WTC11 (cell line): ENCODE measurements at regions of chr5 and their contacts with region 1.

Region 1: DNA sequence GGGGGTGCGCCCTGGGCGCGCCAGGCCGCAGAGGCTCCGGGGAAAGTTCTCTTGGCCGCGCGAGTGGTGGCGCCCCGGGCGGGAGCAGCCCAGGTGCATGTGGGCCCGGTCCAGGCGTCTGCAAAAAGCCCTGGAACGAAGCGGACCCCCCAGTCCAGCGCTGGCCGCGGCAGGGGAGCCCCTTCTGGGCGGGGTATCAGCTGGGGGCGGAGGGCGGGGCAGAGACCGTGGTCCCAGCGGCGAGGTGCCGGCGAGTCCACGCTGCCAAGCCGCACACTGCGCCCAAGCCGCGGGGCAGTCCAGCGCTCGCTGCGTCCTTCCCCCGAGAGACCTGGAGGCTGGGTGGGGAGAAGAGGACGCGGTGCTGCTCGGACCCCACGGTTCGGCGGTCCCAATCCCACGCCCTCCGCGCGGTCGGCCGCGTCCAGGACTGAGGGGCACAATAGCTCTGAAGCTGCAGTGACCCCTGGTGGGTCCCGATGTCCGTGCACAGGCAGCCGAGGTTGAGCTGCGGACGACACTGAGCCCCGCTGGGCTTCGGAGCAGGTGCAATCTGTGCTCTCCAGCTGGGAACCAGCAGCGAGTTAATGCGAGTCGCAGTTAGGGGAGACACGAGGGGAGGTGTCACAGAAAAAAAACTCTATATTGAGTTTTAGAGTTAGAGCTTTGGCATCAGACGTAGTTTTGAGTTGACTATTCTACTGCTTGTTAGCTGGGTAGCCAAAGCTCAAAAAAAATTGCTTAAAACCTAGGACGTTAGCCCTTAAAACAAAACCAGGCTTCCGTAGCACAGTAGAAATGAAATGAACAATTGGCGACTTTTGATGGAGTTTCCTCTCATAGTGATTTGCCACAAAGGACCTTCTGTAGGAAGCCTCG is 1.1 kb upstream of the EPB41L4A start:
- DNase-seq: peak; percentile 90
- ATAC-seq: peak; percentile 85
- H3K4me3 Mint-ChIP-seq: peak overlapping the region; percentile 80
- H3K27ac Mint-ChIP-seq: no peak overlapping the region
- H3K4me1 Mint-ChIP-seq: peaks cover 21% of the 10 kb centered on the region
- H3K27me3 Mint-ChIP-seq: peaks cover 47% of the 10 kb centered on the region
- CTCF ChIP-seq: peak; percentile 77

Region 2: GRCh38 chr5:112165897-112166806 is 254.1 kb before region 1 on chr5:
- CTCF ChIA-PET with region 1: interaction called, 36 read pairs
- POLR2A ChIA-PET with region 1: interaction called, 11 read pairs
- DNase-seq: peak; percentile 41
- ATAC-seq: peak; percentile 82
- H3K4me3 Mint-ChIP-seq: no peak overlapping the region
- H3K27ac Mint-ChIP-seq: peak overlapping the region; percentile 94
- H3K4me1 Mint-ChIP-seq: peaks cover 65% of the 10 kb centered on the region
- H3K27me3 Mint-ChIP-seq: no peaks in the 10 kb centered on the region
- CTCF ChIP-seq: no peak

Region 3: DNA sequence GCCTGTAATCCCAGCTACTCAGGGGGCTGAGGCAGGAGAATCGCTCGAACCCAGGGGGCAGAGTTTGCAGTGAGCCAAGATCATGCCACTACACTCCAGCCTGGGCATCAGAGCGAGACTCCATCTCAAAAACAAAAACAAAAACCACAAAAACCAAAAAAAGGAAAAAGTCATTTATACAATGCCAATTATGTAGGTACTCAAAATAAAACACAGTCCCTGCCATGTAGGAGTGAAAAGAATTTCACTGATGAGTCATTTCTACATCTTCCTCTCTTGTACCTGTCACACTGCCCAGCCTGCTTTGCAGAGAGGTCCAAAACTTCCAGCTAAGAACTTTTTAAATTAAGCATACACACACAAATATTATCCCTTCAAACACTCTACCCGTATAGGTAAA is 217.0 kb before region 1 on chr5:
- CTCF ChIA-PET with region 1: interaction called, 11 read pairs
- POLR2A ChIA-PET with region 1: interaction called, 3 read pairs
- DNase-seq: no peak
- ATAC-seq: no peak
- H3K4me3 Mint-ChIP-seq: no peak overlapping the region
- H3K27ac Mint-ChIP-seq: no peak overlapping the region
- H3K4me1 Mint-ChIP-seq: peaks cover 47% of the 10 kb centered on the region
- H3K27me3 Mint-ChIP-seq: peaks cover 2% of the 10 kb centered on the region; the same call in 1 of the 2 replicates
- CTCF ChIP-seq: no peak

Region 4: DNA sequence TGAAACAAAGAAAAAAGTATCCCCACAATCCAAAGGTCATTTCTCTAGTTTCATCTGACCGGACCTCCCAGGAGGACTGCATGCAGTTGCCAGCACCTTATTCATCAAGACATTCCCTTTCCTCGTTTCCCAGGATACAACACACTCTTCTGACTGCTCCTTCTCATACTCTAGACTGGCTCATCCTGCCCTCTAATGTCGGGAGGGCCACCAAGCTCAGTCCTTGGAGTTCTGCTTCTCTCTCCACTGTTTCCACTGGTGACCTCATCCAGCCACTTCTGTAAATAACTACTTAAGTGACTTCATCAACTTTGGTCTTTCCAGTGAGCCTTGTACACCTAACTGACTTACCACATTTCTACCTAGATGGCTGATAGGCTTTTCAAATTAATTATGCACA is 180.2 kb before region 1 on chr5:
- CTCF ChIA-PET with region 1: interaction called, 34 read pairs
- POLR2A ChIA-PET with region 1: interaction called, 3 read pairs
- DNase-seq: no peak
- ATAC-seq: peak; percentile 73
- H3K4me3 Mint-ChIP-seq: no peak overlapping the region
- H3K27ac Mint-ChIP-seq: peak overlapping the region; percentile 10; the same call in 1 of the 2 replicates
- H3K4me1 Mint-ChIP-seq: peaks cover 25% of the 10 kb centered on the region
- H3K27me3 Mint-ChIP-seq: no peaks in the 10 kb centered on the region
- CTCF ChIP-seq: no peak

Region 5: DNA sequence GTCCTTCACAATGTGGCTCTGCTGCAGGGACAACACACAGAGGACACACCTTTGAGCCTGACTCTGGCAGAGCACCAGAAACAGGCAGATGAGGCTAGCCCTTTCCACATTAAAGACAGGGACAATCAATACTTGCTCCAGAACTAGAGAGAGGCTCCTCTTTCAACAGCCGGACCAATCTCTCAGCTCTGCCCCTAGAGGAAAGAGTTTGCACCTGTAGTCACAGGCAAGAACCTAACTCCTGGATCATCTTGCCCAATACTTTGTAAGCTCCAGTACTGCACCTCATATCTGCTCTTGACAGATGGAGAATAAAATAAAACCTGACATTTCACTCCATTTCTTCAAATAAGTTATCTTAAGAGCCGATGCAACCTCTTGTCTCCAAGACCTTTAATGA is 53.2 kb before region 1 on chr5:
- CTCF ChIA-PET with region 1: interaction called, 18 read pairs
- POLR2A ChIA-PET with region 1: no interaction called
- DNase-seq: peak; percentile 33
- ATAC-seq: peak; percentile 98
- H3K4me3 Mint-ChIP-seq: no peak overlapping the region
- H3K27ac Mint-ChIP-seq: no peak overlapping the region
- H3K4me1 Mint-ChIP-seq: peaks cover 11% of the 10 kb centered on the region
- H3K27me3 Mint-ChIP-seq: no peaks in the 10 kb centered on the region
- CTCF ChIP-seq: no peak

Region 6: GRCh38 chr5:112397690-112398089 is 22.5 kb before region 1 on chr5:
- CTCF ChIA-PET with region 1: no interaction called
- POLR2A ChIA-PET with region 1: no interaction called
- DNase-seq: no peak
- ATAC-seq: no peak
- H3K4me3 Mint-ChIP-seq: no peak overlapping the region
- H3K27ac Mint-ChIP-seq: no peak overlapping the region
- H3K4me1 Mint-ChIP-seq: peaks cover 7% of the 10 kb centered on the region
- H3K27me3 Mint-ChIP-seq: no peaks in the 10 kb centered on the region
- CTCF ChIP-seq: no peak

Region 7: DNA sequence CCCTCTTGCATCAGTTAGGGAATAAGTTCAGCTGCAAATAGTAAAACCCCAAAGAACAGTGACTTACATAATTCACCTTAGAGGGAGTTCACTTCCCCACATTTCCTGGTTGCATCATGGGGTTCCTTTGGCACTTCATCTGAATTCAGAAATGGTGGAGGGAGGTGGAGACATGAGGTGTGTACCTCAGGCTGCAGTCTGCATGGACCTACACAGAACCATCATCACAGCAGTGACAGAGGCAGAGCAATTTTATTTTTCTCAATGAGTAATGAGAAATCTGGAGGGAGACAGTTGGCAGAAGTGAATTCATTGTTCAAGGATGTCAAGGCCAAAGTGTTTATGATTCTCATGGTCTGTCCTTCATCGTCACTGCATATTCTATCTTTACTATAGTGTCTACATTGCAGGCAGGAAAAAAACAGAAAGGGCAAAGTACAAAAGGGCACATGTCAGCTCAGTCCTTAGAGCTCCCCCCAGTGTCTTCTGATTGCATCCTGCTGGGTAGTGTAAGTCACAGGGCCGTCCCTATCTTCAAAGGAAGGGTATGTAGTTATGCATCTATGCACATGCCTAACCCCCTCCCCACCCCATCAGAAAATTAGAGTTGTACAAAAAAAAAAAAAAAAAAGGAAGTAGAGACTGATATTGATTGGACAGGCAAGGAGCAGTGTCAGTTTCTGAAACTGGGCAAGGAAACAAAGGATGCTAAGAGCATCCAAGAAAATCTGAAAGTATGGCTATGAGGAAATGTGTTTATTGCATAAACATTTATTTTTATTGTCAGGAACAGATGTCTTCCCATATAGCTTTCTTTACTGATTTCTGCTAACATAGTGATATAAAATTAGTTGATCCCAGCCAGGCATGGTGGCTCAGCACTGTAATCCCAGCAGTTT is 184.8 kb after region 1 on chr5:
- CTCF ChIA-PET with region 1: no interaction called
- POLR2A ChIA-PET with region 1: no interaction called
- DNase-seq: no peak
- ATAC-seq: peak; percentile 87
- H3K4me3 Mint-ChIP-seq: no peak overlapping the region
- H3K27ac Mint-ChIP-seq: no peak overlapping the region
- H3K4me1 Mint-ChIP-seq: peaks cover 20% of the 10 kb centered on the region
- H3K27me3 Mint-ChIP-seq: no peaks in the 10 kb centered on the region
- CTCF ChIP-seq: no peak

Region 8: GRCh38 chr5:113367586-113367985 is 947.4 kb after region 1 on chr5:
- CTCF ChIA-PET with region 1: no interaction called
- POLR2A ChIA-PET with region 1: no interaction called
- DNase-seq: no peak
- ATAC-seq: peak; percentile 86
- H3K4me3 Mint-ChIP-seq: no peak overlapping the region
- H3K27ac Mint-ChIP-seq: no peak overlapping the region
- H3K4me1 Mint-ChIP-seq: no peaks in the 10 kb centered on the region; the same call in 1 of the 2 replicates
- H3K27me3 Mint-ChIP-seq: peaks cover 5% of the 10 kb centered on the region; the same call in 1 of the 2 replicates
- CTCF ChIP-seq: no peak